Transverse colon (tissue), 4 donors: ENCODE measurements at regions of chr18 and their contacts with region 1.

Region 1: DNA sequence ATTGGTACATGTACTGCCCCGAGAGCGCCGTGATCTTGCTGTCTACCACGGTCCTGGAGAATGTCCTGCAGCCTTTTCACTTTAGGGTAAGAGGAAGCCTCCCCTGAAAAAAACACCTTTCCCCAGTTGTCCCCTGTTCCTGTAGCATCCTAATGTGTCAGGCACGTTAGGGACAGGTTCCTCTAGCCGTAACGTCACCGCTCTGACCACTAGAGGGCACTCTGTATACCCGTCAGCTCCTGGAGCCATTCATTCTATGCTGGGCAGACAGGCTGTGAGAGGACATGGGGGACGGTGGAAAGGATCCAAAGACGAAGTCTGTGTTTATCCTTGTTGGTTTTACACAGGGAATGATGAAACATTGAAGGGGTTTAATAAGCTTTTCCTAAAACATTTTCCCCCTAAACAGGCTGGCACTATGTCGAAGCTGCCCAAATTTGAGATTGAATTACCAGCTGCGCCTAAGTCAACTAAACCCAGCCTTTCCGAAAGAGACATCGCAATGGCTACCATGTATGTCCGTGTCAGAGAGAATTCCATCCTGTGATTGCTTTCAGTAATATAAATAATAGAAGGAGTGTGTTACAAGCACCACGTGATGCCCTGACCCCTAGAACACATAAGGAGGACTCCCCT is 12.7 kb downstream of the RMC1 start:
- DNase-seq: peak; percentile 82
- H3K4me3 ChIP-seq: no peak overlapping the region
- H3K27ac ChIP-seq: no peak overlapping the region
- H3K4me1 ChIP-seq: no peaks in the 10 kb centered on the region
- H3K27me3 ChIP-seq: no peaks in the 10 kb centered on the region
- CTCF ChIP-seq: peak; percentile 77 to 88 (median 83)
- EP300 ChIP-seq: no peak
- POLR2A ChIP-seq: no peak

Region 2: GRCh38 chr18:23479829-23480505 is 36.1 kb before region 1 on chr18:
- in situ Hi-C with region 1: no loop called
- intact Hi-C with region 1: loop called (anchors 1 kb)
- DNase-seq: no peak
- H3K4me3 ChIP-seq: no peak overlapping the region
- H3K27ac ChIP-seq: no peak overlapping the region
- H3K4me1 ChIP-seq: peaks cover 0 to 2% (median 0%) of the 10 kb centered on the region in 4 donors
- H3K27me3 ChIP-seq: no peaks in the 10 kb centered on the region
- CTCF ChIP-seq: no peak
- EP300 ChIP-seq: no peak
- POLR2A ChIP-seq: no peak

Region 3: GRCh38 chr18:23529597-23529996 is 13.6 kb after region 1 on chr18:
- in situ Hi-C with region 1: no loop called
- intact Hi-C with region 1: no loop called
- DNase-seq: no peak
- H3K4me3 ChIP-seq: no peak overlapping the region
- H3K27ac ChIP-seq: no peak overlapping the region
- H3K4me1 ChIP-seq: no peaks in the 10 kb centered on the region
- H3K27me3 ChIP-seq: no peaks in the 10 kb centered on the region
- CTCF ChIP-seq: no peak
- EP300 ChIP-seq: no peak
- POLR2A ChIP-seq: no peak

Region 4: DNA sequence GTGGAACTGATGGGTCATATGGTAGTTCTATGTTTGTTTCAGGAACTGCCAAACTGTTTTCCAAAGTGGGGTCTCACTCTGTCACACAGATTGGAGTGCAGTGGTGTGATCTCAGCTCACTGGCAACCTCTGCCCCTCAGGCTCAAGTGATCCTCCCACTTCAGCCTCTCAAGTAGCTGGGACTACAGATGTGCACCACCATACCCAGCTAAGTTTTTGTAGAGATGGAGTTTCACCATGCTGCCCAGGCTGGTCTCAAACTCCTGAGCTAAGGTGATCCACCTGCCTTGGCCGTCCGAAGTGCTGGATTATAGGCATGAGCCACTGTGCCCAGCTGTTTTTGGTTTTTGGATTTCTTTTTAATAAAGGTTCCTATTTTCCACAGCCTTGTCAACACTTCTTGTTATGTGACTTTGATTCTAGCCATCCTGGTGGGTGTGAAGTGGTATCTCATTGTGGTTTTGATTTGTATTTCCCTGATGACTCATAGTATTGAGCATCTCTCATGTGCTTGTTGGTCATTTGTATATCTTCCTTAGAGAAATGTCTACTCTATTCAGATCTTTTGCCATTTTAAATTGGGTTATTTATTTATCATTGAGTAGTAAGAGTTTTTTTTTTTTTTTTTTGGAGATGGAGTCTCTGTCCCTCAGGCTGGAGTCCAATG is 47.5 kb after region 1 on chr18:
- in situ Hi-C with region 1: loop called in 1 of 4 experiments (anchors 10 kb)
- intact Hi-C with region 1: no loop called
- DNase-seq: no peak
- H3K4me3 ChIP-seq: no peak overlapping the region
- H3K27ac ChIP-seq: no peak overlapping the region
- H3K4me1 ChIP-seq: no peaks in the 10 kb centered on the region
- H3K27me3 ChIP-seq: no peaks in the 10 kb centered on the region
- CTCF ChIP-seq: no peak
- EP300 ChIP-seq: no peak
- POLR2A ChIP-seq: no peak

Region 5: DNA sequence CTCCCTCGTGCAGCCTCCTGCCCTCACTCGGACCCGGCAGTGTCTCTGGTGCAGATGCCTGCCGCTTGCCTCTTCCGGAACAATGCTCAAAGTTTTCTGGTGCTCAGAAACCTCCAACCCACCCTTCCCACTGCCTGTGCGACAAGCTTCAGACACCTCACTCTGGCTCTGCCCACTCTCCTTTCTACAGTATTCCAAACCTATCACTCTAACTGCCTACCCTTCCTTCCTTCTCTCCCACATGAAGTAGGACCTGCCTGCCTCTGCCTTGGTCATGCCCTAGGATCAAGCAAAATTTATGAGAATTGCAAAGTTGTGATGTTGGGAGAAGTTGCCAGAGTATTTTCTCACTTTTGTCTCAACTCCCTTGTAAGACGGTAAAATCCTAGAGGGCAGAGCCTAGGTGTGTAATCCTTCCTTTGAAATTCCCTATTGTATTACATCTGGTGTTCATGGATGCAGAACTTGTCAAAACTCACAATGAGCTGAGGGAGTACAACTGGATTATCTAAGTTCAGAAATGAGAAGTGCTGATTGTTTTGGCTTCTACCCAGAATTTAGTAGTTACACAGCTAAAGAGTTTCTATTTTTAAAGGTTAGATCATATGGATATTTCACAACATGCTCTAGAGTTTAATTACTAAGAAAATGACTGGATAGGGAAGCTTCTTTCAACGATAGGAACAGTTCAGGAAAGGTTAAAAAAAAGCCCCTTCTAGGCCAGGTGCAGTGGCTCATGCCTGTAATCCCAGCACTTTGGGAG is 63.0 kb after region 1 on chr18:
- in situ Hi-C with region 1: loop called in 3 of 4 experiments (anchors 5 to 10 kb)
- intact Hi-C with region 1: no loop called
- DNase-seq: no peak
- H3K4me3 ChIP-seq: no peak overlapping the region
- H3K27ac ChIP-seq: no peak overlapping the region
- H3K4me1 ChIP-seq: peaks cover 5 to 53% (median 11%) of the 10 kb centered on the region in 4 donors
- H3K27me3 ChIP-seq: no peaks in the 10 kb centered on the region
- CTCF ChIP-seq: no peak
- EP300 ChIP-seq: no peak
- POLR2A ChIP-seq: no peak

Region 6: DNA sequence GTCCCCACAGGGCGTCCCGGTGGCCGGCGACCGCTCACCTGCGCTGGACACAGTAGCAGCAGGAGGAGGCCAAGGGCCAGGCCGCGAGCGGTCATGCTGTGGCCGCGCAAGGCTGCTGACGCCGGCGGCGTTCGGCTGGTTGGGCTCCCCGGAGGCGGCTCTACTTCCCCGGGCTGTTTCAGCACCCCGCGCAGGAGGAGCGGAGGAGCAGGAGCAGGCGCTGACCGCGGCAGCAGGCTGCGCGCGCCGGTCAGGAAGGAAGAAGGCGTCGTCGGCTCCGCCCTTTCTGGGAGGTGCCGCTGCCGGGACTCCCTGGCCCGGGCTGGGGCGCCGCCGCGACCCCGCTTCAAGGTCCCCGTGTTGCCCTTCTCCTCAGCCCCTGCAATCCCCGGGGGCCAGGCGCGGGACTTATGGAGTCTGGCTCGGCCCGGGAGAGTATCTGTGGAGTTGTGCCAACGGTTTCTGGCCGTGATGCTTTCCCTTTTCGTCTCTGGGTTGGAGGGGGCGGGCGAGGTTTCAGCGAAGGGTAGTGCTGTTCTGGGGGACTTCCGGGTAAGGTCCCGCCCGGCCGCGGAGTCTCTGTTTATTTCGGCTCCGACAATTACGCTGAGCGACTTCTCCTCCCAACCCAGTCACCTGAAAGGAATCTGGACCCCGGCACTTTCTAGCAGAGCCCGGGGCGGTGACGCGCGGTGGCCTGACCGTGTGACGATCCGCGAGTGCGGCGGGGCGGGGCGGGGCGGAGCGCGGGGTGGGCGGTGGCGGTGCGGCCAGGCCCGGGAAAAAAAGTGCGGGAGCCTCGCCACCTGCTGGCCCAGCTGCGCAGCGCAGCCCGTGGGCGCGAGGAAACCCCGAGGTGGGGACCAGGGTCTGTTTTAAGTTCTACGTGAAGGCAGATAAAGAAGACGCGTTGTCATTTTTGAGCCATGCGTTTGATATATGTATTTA is 70.5 kb after region 1 on chr18 and contains the start of gene NPC1:
- in situ Hi-C with region 1: loop called in 2 of 4 experiments (anchors 5 to 10 kb)
- intact Hi-C with region 1: loop called (anchors 5 kb)
- DNase-seq: peak; percentile 95
- H3K4me3 ChIP-seq: peak within 1 kb of the TSS; percentile 68 to 87 (median 80)
- H3K27ac ChIP-seq: peak within 1 kb of the TSS; percentile 97 to 100 (median 98)
- H3K4me1 ChIP-seq: peaks cover 0 to 40% (median 19%) of the 10 kb centered on the region in 4 donors
- H3K27me3 ChIP-seq: no peaks in the 10 kb centered on the region
- CTCF ChIP-seq: peak; percentile 87 to 97 (median 94)
- EP300 ChIP-seq: peak; percentile 26
- POLR2A ChIP-seq: peak; percentile 97
- total RNA-seq, gene NPC1: 33.6 to 96.1 (median 49.7) TPM